ENCODE measurements at regions of chr15 and their contacts with region 1.

Region 1: GRCh38 chr15:34101366-34102175 is at the starts of genes EMC7 and PGBD4:
- DNase-seq: peak; percentile 100
- H3K4me3 Mint-ChIP-seq: peak within 1 kb of the TSS; percentile 99
- H3K27ac Mint-ChIP-seq: peak within 1 kb of the TSS; percentile 96
- H3K4me1 Mint-ChIP-seq: peaks cover 36% of the 10 kb centered on the region
- H3K27me3 Mint-ChIP-seq: no peaks in the 10 kb centered on the region
- total RNA-seq, gene EMC7: 62.7 to 68.4 TPM
- total RNA-seq, gene PGBD4: 2.0 to 2.3 TPM

Region 2: GRCh38 chr15:33934921-33935320 is 166.7 kb before region 1 on chr15:
- CTCF ChIA-PET with region 1: no interaction called
- POLR2A ChIA-PET with region 1: no interaction called
- intact Hi-C with region 1: no loop called
- DNase-seq: no peak
- H3K4me3 Mint-ChIP-seq: no peak overlapping the region
- H3K27ac Mint-ChIP-seq: no peak overlapping the region
- H3K4me1 Mint-ChIP-seq: no peaks in the 10 kb centered on the region
- H3K27me3 Mint-ChIP-seq: no peaks in the 10 kb centered on the region

Region 3: GRCh38 chr15:34154725-34155204 is 53.2 kb after region 1 on chr15:
- CTCF ChIA-PET with region 1: no interaction called
- POLR2A ChIA-PET with region 1: no interaction called
- intact Hi-C with region 1: loop called (anchors 2 kb)
- DNase-seq: peak; percentile 21
- H3K4me3 Mint-ChIP-seq: no peak overlapping the region
- H3K27ac Mint-ChIP-seq: peak overlapping the region; percentile 74
- H3K4me1 Mint-ChIP-seq: peaks cover 12% of the 10 kb centered on the region
- H3K27me3 Mint-ChIP-seq: no peaks in the 10 kb centered on the region

Region 4: DNA sequence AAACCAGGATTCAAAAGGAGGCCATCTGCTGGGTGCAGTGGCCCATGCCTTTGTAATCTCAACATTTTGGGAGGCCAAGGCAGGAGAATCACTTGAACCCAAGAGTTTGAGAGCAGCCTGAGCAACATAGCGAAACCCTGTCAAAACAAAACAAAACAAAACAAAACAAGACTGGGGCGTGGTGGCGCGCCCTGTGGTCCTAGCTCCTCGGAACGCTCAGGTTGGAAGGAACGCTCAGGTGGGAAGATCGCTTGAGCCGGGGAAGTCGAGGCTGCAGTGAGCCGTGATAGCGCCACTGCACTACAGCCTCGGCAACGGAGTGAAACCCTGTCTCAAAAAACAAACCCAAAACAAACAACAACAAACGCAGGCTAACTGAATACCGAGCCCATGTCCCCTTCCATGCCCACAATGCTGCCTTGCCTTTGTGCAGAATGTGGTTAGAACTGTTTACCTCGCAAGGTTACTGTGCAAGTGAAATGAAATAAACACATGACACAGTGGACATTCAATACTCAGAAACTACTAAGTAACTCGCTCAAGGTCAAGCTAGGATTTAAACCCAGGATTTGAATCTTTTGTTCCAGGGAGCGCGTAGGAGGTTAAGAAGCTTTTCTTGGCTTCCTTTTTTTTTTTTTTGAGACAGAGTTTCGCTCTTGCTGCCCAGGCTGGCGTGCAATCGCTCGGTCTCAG is 122.5 kb after region 1 on chr15:
- CTCF ChIA-PET with region 1: no interaction called
- POLR2A ChIA-PET with region 1: interaction called, 4 read pairs
- intact Hi-C with region 1: loop called (anchors 1 kb)
- DNase-seq: no peak
- H3K4me3 Mint-ChIP-seq: peak overlapping the region; percentile 98
- H3K27ac Mint-ChIP-seq: peak overlapping the region; percentile 98
- H3K4me1 Mint-ChIP-seq: peaks cover 27% of the 10 kb centered on the region
- H3K27me3 Mint-ChIP-seq: peaks cover 2% of the 10 kb centered on the region

Measured in activated CD4-positive, alpha-beta memory T cell treated with anti-CD3 and anti-CD28 coated beads for 36 hours (primary cell).